ENCODE measurements at regions of chr11 and their contacts with region 1.

Region 1: DNA sequence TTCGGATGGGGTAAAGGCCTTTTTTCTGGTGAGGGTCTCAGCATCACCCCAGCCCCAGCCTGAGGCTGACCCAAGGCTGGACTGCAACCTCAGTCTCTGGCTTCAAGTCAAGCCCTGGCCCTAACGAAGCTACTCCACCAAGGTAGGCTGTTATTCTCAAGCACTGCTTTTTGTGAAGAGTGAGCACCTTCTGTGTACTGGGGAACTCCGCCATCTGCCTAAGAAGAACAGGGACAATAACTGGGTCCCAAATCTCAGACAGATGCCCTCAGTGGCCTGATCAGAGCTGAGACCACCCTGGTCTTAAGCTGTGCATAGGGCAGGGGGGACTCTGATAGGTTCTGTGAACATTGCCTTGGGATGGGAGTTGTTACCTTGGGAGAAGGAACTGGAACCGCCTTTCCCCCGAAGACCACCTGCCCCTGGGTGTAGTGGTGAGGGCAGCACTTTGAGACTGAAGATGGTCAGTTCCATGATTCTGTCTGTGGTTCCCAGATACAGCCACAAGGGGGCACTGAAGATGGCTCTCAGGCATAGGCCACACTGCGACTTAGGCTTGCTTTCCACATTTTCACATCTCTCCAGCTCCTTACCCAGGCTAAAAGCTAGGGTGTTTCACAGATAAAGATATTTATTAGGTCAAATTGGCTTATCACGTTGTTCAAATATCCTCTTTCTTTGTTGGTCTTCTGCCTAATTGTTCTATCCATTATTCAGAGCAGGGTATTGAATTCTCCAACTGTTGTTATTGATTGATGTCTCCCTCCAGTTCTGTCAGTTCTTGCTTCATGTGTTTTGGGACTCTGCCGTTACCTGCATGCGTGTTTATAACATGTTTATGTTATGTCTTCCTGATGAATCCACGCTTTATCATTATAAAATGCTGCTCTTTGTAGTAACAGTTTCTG is 11.8 kb upstream of the UVRAG start:
- DNase-seq: no peak
- H3K4me3 ChIP-seq: no peak overlapping the region
- H3K27me3 ChIP-seq: no peaks in the 10 kb centered on the region
- CTCF ChIP-seq: peak; percentile 90

Region 2: GRCh38 chr11:75779960-75780359 is 23.2 kb before region 1 on chr11:
- CTCF ChIA-PET with region 1: interaction called, 10 read pairs
- POLR2A ChIA-PET with region 1: no interaction called
- DNase-seq: no peak
- H3K4me3 ChIP-seq: no peak overlapping the region
- H3K27me3 ChIP-seq: no peaks in the 10 kb centered on the region; the same call in 1 of the 2 replicates
- CTCF ChIP-seq: no peak

Region 3: DNA sequence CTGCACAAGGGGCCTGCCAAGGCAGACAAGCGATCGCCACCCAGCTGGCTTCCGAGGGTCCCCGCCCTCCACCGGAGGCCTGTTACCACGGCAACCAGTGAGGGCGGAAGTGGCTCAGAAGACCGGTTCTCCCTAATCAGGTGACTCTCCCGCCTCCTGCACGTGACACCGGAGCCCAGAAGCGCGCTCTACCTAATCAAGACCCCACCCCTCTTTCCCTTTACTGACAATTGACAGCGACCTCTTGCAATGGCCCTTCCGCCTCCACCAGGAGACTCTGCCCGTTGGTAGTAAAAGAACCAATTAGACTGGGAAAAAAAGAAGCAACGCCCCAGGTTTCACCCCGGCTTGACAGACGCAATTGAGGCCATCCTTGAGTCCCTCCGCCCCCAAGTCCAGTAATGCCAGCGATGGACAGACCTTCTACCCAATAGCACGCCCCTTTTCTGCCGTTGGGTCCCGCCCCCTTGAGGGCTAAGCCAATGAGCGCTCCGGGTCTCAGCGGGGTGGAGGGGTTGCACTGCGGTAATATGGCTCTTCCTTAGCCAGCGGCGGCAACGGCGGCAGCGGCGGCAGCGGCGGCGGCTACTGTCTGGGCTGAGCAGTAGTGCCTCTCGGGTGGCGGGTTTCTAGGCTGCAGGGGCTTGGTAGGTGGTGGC is 11.6 kb after region 1 on chr11 and contains the start of gene UVRAG:
- CTCF ChIA-PET with region 1: interaction called, 45 read pairs
- POLR2A ChIA-PET with region 1: no interaction called
- DNase-seq: peak; percentile 99
- H3K4me3 ChIP-seq: peak within 1 kb of the TSS; percentile 73
- H3K27me3 ChIP-seq: no peaks in the 10 kb centered on the region; the same call in 1 of the 2 replicates
- CTCF ChIP-seq: 0 out of 2 replicates have a peak, but pooled peaks have one; percentile 5
- polyA plus RNA-seq, gene UVRAG: 8.2 and 10.7 TPM in 2 replicates

Region 4: GRCh38 chr11:75867775-75868374 is 64.7 kb after region 1 on chr11:
- CTCF ChIA-PET with region 1: interaction called, 184 read pairs
- POLR2A ChIA-PET with region 1: no interaction called
- DNase-seq: no peak
- H3K4me3 ChIP-seq: no peak overlapping the region
- H3K27me3 ChIP-seq: no peaks in the 10 kb centered on the region
- CTCF ChIP-seq: peak; percentile 61

Region 5: DNA sequence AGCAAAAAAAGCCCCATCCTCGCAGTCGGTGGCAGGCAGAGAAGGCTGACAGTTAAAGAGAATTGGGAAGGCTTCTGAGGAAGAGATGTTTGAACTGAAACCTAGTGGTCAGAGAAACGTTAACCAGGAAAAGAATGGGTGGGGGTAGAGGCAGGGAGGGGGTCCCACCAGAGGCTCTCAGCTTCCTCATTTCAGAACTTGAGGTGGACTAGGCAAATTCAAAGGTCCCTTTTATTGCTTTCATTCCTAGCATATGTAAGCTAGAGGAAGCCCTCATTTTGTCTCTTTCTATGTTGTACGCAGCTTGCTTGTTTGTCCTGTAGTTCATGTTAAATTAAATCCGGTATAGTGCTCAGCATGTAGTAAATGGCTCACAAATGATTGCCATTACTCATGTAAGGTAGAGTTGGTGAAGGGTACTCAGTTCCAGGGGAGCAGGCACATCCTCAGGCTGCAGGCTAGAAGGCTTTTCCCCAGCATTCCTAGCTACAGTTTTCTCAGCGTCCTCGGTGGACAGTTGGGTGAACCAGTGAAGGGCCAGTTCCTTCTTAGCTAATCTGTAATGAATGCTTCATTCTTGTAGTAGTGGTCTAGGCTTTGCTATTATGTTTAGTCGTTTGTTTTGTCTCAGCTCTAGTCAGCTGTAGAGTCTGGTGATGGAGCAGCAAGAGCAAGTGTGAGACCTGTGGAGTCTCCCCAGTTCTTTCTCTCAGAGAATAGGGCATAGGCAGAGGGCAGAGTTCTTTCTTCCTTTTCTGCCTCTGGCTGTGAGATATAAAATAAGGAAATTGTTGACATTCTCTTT is 70.5 kb after region 1 on chr11:
- CTCF ChIA-PET with region 1: interaction called, 184 read pairs
- POLR2A ChIA-PET with region 1: no interaction called
- DNase-seq: no peak
- H3K4me3 ChIP-seq: no peak overlapping the region
- H3K27me3 ChIP-seq: no peaks in the 10 kb centered on the region
- CTCF ChIP-seq: no peak

Region 6: DNA sequence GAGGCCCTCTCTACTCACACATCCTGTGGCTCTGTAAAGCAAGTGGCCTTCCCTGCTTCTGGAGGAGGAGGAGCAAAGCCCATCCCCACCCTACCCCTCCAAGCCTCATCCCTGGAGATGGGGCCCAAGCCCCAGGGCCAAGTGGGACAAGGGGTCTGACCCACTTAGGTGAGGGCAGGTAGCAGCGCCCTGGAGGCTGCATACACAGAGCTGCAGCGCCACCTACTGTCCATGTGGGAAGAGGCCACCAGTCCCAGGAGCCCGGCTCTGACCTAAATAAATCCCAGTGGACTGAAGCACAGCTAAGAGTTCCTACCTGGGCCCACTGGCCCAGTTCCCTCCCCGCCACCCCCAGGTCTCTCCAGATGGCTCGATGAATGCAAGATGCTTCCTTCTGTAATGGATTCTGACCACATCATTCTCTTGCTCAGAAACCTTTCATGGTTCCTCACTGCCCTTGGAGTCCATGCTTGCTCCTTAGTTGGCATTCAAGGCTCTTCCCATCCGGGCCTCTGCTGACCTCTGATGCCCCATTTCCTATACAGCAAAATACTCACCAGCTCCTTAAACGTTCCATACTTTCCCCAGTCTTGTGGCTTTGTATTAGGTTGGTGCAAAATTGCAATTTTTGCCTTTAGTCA is 515.7 kb after region 1 on chr11:
- CTCF ChIA-PET with region 1: interaction called, 21 read pairs
- POLR2A ChIA-PET with region 1: no interaction called
- DNase-seq: no peak
- H3K4me3 ChIP-seq: no peak overlapping the region
- H3K27me3 ChIP-seq: peaks cover 17% of the 10 kb centered on the region
- CTCF ChIP-seq: peak; percentile 92

Measured in BJ (cell line).